ENCODE measurements at regions of chr15 and their contacts with region 1.

Region 1: DNA sequence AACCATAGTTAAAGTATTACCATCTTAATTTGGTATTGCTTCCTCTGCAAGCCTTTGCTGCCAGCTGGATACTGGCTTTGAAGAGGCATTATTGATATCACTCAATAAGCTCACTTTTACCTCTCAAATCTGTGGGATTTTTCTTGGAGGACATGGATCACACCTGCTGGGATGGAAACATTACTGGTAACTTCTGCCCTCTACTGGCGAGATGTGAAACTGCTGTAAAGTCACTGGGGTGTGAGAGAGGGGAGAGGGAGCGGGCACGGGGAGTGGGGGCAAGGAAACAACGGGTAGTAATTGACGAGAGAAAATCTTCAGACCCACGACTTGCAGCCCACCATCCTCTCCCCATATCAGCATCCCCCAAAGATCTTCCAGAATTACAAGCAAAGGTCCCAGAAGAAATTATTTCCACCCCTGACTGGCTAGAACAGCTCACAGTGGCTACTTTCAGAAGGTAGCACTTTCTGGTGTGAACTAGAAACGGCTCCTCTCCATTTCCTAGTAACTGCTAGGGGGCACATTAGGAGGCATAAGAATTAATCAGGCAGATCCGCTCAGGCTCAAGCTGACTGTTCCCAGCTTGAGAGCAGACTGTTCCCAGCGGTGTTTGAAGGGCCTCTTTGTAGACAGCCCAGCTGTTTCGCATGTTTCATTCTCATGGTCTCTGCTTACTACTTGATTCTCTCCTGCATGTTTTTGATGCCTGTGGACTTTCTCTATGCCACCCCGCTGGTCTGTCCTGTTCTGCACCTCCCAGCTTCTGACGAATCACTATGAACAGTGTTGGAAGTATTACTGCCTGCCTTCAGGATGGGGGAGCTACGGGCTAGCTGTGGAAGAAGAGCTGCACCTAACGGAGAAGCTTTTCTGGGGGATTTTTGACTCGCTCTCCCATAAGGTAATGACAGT is 230.4 kb upstream of the CHRM5 start:
- DNase-seq: peak; percentile 71
- H3K4me3 ChIP-seq: no peak overlapping the region; a peak in 1 of 4 replicates
- H3K27ac ChIP-seq: no peak overlapping the region
- H3K4me1 ChIP-seq: no peaks in the 10 kb centered on the region; a peak in 1 of 4 replicates
- H3K27me3 ChIP-seq: no peaks in the 10 kb centered on the region
- CTCF ChIP-seq: peak; percentile 88
- EP300 ChIP-seq: no peak
- RAD21 ChIP-seq: peak; percentile 68

Region 2: DNA sequence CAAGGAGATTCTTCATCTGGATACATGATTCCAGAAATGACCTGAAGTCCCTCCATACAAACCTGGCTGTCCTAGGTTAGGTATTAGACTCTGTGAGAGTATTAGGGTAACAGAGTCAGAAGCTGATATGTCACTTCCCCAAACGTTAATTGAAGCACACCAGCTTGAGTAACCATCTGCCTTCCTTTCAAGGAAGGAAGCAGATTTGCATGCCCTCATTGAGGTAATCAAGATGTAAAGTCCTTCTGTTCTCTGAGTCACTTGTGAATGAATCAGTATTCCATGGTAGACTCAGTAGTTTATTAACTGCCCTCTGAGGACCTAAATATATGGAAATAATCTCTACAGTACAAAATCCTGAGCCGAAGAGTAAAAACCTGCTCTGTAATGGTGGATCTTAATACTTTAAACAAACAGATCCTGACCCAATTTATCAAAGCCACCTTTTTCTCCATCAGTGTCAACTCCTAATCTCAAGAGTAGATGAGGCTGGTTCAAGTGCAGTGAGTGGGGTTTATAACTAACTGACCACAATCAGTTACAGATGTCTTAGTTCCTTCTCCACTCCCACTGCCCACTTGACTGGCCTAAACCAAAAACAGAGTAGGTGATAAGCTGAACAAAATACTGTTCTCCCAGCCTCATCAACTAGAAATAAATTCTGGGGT is 15.8 kb before region 1 on chr15:
- CTCF ChIA-PET with region 1: interaction called, 131 read pairs
- POLR2A ChIA-PET with region 1: no interaction called
- DNase-seq: no peak
- H3K4me3 ChIP-seq: no peak overlapping the region
- H3K27ac ChIP-seq: peak overlapping the region in 1 of 2 experiments; percentile 89; a peak in 2 of 4 replicates
- H3K4me1 ChIP-seq: peaks cover 0 to 13% of the 10 kb centered on the region in 2 experiments; a peak in 1 of 4 replicates
- H3K27me3 ChIP-seq: no peaks in the 10 kb centered on the region
- CTCF ChIP-seq: no peak
- EP300 ChIP-seq: no peak
- RAD21 ChIP-seq: no peak

Region 3: DNA sequence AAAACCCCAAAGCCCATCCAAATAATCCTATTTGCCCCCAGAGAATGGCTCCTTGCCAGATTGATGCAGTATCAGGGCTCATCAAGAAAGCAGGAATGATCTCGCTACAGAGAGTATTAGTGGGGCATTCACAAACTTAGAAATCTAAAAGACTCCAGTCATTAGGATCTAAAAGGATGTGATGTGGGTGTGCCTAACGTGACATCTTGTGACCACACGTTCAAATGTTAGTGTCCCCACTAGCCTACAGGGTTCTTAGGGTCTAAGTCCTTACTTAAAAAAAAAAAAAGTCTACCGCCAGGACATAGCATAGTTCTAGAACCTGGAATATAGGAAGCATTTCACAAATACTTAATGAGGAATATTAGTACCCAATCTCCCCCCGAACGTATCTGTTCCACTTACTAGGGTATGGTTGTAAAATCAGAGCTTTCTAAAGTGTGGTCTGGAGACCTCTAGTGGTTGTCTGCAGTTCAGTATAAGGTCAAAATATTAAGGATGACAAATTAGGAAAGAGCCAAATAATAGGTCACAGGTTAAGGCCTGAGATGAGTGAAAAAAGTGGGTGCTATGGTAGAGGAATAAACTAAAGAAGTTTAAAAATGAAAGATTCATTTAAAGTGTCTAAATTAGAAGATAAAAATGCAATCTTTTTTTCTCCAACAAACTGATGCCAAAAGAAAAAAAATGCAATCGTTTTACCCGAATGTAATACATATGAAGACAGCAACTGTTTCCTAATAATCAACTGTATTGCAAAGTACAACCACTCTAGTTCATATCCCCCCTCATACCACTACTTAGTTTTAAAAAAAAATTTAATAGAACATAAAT is 226.1 kb after region 1 on chr15:
- CTCF ChIA-PET with region 1: interaction called, 98 read pairs
- POLR2A ChIA-PET with region 1: no interaction called
- DNase-seq: peak; percentile 47
- H3K4me3 ChIP-seq: no peak overlapping the region; a peak in 1 of 4 replicates
- H3K27ac ChIP-seq: no peak overlapping the region
- H3K4me1 ChIP-seq: no peaks in the 10 kb centered on the region; a peak in 1 of 4 replicates
- H3K27me3 ChIP-seq: no peaks in the 10 kb centered on the region
- CTCF ChIP-seq: peak; percentile 91
- EP300 ChIP-seq: no peak
- RAD21 ChIP-seq: peak; percentile 82

Region 4: DNA sequence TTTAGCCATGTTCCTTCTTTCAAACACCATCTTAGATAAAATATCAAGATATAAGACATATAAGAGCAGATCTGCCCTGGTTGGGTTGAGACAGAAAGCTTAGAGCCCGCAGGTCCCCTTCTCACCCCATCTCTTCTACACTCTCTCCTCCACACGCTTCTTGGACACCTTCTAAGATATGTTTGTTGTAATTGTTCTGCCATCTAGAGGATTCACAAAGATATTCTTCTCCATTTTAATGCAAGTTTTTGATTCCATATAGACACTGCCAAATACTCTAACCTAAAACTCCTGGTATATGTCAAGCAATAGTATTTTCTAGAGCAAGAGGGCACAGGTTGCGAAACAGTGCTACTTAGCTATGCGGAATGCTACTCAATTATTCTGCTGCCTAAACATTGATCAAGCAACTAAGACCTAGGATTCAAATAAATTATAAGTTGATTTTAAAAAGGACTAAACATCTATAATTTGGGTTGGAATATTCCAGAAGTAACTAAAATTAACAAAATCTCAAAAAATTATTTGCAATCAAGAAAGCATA is 237.2 kb after region 1 on chr15:
- CTCF ChIA-PET with region 1: interaction called, 98 read pairs
- POLR2A ChIA-PET with region 1: no interaction called
- DNase-seq: no peak
- H3K4me3 ChIP-seq: no peak overlapping the region
- H3K27ac ChIP-seq: no peak overlapping the region
- H3K4me1 ChIP-seq: no peaks in the 10 kb centered on the region; a peak in 1 of 4 replicates
- H3K27me3 ChIP-seq: no peaks in the 10 kb centered on the region
- CTCF ChIP-seq: peak; percentile 42; the same call in 1 of the 2 replicates
- EP300 ChIP-seq: no peak
- RAD21 ChIP-seq: peak; percentile 39

Region 5: GRCh38 chr15:34271493-34271892 is 533.5 kb after region 1 on chr15:
- CTCF ChIA-PET with region 1: no interaction called
- POLR2A ChIA-PET with region 1: no interaction called
- DNase-seq: no peak
- H3K4me3 ChIP-seq: no peak overlapping the region
- H3K27ac ChIP-seq: no peak overlapping the region
- H3K4me1 ChIP-seq: no peaks in the 10 kb centered on the region
- H3K27me3 ChIP-seq: no peaks in the 10 kb centered on the region
- CTCF ChIP-seq: no peak
- EP300 ChIP-seq: no peak
- RAD21 ChIP-seq: no peak